Left cardiac atrium (tissue), 4 donors: ENCODE measurements at regions of chr16 and their contacts with region 1.

Region 1: DNA sequence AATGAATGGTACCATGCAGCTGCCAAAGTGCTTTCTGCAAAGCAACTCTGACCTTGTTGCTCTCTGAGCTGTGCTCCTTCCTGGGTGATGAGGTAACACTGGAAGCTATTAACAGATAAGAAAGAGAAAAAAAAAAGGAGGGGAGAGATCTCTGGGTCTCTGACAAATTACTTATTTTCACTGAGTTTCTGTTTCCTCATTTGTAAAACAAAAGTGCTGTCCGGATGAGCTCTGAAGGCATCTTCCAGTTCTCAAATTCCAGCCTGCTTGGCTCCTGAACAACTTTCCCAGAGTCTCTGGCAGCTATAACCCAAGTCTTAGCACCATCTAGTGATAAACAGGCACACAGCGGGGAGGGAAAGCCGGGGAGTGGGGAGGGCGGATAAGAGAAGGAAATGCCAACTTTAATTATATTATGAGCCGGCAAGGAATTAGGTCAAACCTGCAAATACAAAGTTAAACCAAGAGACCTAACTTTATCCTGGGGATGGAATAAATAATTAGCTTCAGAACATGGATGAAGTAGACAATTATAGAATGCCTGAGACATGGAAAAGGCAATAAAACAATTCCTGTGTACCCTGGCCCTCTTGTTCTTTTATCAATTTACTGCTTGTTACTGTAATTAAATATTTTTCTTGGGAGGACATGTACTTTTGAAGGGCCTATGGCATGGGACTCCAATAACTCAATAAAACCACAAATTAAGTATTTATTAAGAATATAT is 61.3 kb upstream of the KIFC3 start:
- DNase-seq: peak; percentile 74
- ATAC-seq: peak; percentile 94 to 95

Region 2: DNA sequence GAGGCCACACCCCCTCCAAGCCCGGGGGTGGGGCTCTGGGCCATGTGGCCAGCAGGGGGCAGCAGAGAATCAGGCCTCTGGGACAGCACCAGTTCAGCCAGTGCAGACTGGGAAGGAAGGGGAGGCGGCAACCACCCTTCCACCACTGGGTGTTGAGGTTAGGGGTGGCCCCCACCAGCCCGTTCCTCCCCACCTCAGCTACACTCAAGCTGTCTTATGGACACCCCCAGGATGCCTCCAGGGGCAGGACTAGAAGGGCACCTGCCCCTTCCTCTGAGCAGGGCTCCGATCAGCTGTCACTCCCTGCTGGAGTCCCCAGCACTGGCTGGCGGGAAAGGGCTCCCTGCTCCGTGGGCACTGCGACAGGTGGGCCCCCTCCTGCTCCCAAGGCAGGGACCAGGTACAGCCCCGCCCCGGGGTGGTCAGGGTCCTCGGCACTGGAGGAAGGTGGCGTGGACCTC is 106.2 kb before region 1 on chr16:
- intact Hi-C with region 1: loop called (anchors 1 to 2 kb)
- DNase-seq: peak; percentile 91
- ATAC-seq: peak; percentile 86 to 94

Region 3: DNA sequence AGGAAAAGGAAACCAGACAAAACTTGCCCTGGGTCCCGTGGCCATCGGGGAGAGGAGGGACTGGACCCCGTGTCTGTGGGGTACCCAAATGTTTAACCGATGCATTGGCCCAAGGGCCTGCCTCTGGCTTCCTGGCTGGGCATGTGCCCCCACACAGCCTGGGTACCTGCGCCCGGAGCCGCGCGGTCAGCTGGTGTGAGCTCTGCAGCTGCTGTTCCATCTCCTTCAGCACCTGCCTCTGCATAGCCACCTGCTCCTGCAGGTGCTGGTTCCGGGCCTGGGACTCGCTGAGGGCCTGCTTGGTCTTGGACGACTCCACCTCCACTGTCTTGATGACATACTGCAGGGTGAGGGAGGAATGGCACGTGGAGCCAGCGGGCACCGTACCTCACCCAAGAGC is 93.2 kb before region 1 on chr16:
- intact Hi-C with region 1: no loop called
- DNase-seq: no peak
- ATAC-seq: no peak

Region 4: GRCh38 chr16:57802341-57803133 is 61.1 kb before region 1 on chr16 and contains the start of gene KIFC3:
- intact Hi-C with region 1: loop called in 1 of 2 experiments (anchors 2 kb)
- DNase-seq: peak; percentile 93
- ATAC-seq: peak; percentile 51 to 75
- total RNA-seq, gene KIFC3: 37.1 to 55.4 TPM

Region 5: GRCh38 chr16:58011652-58012051 is 148.1 kb after region 1 on chr16:
- intact Hi-C with region 1: no loop called
- DNase-seq: no peak
- ATAC-seq: no peak